RWPE1 (cell line): ENCODE measurements at regions of chr9 and their contacts with region 1.

Region 1: DNA sequence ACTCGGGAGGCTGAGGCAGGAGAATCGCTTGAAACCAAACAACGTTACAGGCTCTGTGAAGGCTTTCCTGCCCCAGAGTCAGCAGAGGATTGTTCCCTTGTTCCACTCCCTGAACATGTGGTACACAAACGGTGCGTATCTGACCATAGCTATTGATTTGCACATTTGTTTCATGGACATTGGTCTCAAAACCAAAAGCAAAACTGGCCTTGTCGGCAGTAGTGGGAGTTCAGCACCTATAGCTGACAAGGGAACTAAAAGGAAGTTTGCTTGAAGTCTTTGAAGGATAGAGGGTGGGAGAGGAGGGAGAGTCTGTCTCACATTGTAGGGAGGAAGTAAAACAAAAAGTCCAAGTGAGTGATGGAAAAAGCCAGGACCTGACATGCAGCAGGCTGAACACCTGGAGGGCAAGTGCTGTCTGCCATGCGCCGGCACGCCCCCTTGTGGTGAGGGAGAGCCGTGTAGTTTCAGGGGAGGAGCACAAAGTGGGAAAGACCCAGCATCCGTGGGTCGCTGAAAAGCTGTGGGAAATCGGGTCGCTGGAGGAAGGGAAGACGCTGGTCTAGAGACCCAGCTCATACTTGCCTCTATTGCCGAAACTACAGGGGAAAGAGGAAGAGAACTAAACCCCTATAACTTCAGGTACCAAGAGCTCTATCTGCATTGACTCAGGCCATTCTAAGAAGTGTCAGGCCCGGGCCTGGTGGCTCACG is 58.0 kb downstream of the RAD23B start:
- DNase-seq: peak; percentile 86
- H3K27ac ChIP-seq: peak overlapping the region; percentile 44
- CTCF ChIP-seq: peak; percentile 95

Region 2: GRCh38 chr9:107239474-107239873 is 101.6 kb before region 1 on chr9:
- CTCF ChIA-PET with region 1: interaction called, 11 read pairs
- POLR2A ChIA-PET with region 1: no interaction called
- DNase-seq: peak; percentile 72
- H3K27ac ChIP-seq: no peak overlapping the region
- CTCF ChIP-seq: peak; percentile 43

Region 3: DNA sequence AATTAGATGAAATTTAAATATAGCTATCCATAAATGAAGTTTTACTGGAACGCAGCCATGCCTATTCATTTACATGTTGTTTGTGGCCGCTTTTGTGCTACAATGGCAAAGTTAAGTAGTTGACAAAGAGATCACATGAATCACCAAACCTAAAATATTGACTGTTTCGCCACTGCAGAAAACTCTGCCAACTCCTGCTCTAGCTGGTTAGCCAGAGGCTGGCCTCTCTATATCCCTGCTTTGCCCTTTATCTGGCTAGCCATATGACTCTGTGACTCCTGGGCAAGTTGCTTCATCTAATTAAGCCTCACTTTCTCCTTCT is 56.6 kb after region 1 on chr9:
- CTCF ChIA-PET with region 1: interaction called, 10 read pairs
- POLR2A ChIA-PET with region 1: no interaction called
- DNase-seq: no peak
- H3K27ac ChIP-seq: no peak overlapping the region
- CTCF ChIP-seq: no peak

Region 4: DNA sequence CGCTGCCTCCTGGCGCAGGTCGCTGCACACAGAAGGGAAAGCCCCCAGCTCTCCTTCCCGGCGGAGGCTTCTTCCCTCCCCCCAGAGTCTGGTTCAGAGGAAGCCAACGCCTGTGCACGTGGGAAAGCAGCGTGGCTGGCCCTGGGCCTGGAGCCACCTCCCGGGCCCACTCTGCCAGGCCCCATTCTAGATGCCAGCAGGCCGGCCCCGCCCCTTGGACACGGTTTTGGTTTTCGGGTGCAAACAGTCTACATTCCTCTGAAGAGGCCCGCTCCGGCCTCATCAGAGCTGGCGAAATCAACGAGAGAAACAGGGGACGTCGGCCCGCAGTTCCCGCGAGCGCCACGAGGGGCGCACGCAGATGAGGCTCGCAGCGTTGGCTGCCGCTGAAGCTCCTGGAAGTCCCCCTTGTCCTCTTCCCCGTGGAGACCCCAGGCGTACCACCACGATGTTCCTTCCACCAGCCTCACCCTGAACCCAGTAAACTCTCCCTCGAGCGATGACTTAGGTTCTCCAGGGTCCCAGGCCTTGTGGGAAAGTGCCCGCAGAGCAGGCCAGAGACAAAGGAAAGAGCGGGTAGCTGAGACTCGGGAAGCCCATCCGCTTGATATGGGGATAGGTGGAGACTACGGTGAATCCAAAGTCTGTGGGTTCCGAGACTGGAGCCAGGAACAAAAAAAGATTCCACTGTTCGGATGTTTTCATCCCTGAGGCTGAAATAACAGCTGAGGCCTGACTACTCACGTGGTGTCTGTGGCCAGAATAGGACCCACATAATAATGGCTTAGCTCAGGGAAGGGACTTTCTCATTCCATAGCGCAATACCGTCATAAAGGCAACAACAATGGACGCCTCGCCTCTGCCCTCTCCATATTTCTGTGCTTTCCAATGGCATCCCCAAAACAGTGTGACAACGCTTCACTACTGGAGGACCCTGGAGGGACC is 84.3 kb after region 1 on chr9:
- CTCF ChIA-PET with region 1: interaction called, 18 read pairs
- POLR2A ChIA-PET with region 1: no interaction called
- DNase-seq: peak; percentile 61
- H3K27ac ChIP-seq: peak overlapping the region; percentile 63
- CTCF ChIP-seq: peak; percentile 97